ENCODE measurements at regions of chr12 and their contacts with region 1.

Region 1: GRCh38 chr12:107372229-107372658 is 278.9 kb upstream of the CRY1 start:
- DNase-seq: peak; percentile 36
- H3K4me3 Mint-ChIP-seq: peak overlapping the region; percentile 47
- H3K27ac Mint-ChIP-seq: peak overlapping the region; percentile 87
- H3K4me1 Mint-ChIP-seq: peaks cover 67% of the 10 kb centered on the region
- H3K27me3 Mint-ChIP-seq: no peaks in the 10 kb centered on the region

Region 2: DNA sequence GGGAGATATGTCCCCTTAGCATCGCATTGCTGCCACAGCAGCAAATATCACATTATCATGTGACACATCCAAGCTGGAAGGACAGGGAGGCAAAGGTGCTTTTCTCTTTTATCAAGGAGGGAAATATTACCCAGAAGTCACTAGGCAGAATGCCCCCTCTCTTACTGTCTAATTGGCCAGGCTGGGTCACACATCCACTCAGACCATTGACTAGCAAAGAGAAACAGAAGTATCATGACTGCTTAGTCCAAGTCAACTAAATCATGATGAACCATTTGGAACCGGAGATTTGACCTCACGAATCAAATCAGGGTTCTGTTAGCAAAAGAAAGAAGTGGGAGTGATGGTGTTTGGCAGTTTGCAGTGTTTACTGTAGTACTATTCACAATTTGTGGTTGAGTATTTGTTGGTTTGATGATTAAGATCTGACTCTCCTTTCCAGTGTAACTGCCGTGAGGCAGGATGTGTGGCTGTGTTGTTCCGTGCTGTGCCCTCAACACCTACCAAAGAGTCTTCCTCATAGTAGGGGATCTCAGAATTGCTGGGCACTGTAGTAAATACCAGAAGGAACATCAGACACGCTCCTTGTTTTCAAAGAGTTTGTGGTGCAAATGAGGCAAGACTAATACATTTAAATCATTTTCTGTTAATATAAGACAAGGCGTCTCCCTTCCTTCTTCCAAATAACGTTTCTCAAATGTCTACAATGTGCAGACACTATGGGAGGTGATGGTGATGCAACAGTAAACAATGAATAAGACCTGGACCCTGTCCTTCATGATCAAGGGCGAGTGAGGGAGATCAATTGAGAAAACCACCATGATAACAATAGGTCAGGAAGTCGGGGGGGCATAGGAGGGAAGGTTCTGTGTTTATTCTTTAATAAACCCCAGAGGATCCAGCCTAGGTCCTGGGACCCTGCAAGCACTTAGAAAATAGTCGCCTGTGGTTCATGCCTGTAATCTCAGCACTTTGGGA is 84.5 kb before region 1 on chr12:
- intact Hi-C with region 1: loop called (anchors 2 kb)
- DNase-seq: peak; percentile 49
- H3K4me3 Mint-ChIP-seq: peak overlapping the region; percentile 43
- H3K27ac Mint-ChIP-seq: peak overlapping the region; percentile 82
- H3K4me1 Mint-ChIP-seq: peaks cover 18% of the 10 kb centered on the region
- H3K27me3 Mint-ChIP-seq: peaks cover 7% of the 10 kb centered on the region

Region 3: GRCh38 chr12:107356266-107356936 is 15.8 kb before region 1 on chr12:
- intact Hi-C with region 1: loop called (anchors 1 kb)
- DNase-seq: no peak
- H3K4me3 Mint-ChIP-seq: no peak overlapping the region
- H3K27ac Mint-ChIP-seq: no peak overlapping the region
- H3K4me1 Mint-ChIP-seq: peaks cover 64% of the 10 kb centered on the region
- H3K27me3 Mint-ChIP-seq: no peaks in the 10 kb centered on the region

Region 4: GRCh38 chr12:107393043-107393717 is 20.9 kb after region 1 on chr12:
- intact Hi-C with region 1: no loop called
- DNase-seq: no peak
- H3K4me3 Mint-ChIP-seq: no peak overlapping the region
- H3K27ac Mint-ChIP-seq: no peak overlapping the region
- H3K4me1 Mint-ChIP-seq: peaks cover 47% of the 10 kb centered on the region
- H3K27me3 Mint-ChIP-seq: no peaks in the 10 kb centered on the region

Region 5: GRCh38 chr12:107515446-107515958 is 143.3 kb after region 1 on chr12:
- intact Hi-C with region 1: loop called (anchors 1 kb)
- DNase-seq: no peak
- H3K4me3 Mint-ChIP-seq: no peak overlapping the region
- H3K27ac Mint-ChIP-seq: no peak overlapping the region
- H3K4me1 Mint-ChIP-seq: peaks cover 9% of the 10 kb centered on the region
- H3K27me3 Mint-ChIP-seq: no peaks in the 10 kb centered on the region

Measured in activated T-helper 2 cell treated with anti-CD3 and anti-CD28 coated beads, Interferon-gamma antibody, Interleukin-2, Interleukin-4, amounts not matched to agents 10 μg/mL and 5 μg/mL and 100 μg/mL, durations not matched to agents 14 hours and 24 hours and 36 hours (primary cell).